K562 (cell line): ENCODE measurements at regions of chr17 and their contacts with region 1.

Region 1: DNA sequence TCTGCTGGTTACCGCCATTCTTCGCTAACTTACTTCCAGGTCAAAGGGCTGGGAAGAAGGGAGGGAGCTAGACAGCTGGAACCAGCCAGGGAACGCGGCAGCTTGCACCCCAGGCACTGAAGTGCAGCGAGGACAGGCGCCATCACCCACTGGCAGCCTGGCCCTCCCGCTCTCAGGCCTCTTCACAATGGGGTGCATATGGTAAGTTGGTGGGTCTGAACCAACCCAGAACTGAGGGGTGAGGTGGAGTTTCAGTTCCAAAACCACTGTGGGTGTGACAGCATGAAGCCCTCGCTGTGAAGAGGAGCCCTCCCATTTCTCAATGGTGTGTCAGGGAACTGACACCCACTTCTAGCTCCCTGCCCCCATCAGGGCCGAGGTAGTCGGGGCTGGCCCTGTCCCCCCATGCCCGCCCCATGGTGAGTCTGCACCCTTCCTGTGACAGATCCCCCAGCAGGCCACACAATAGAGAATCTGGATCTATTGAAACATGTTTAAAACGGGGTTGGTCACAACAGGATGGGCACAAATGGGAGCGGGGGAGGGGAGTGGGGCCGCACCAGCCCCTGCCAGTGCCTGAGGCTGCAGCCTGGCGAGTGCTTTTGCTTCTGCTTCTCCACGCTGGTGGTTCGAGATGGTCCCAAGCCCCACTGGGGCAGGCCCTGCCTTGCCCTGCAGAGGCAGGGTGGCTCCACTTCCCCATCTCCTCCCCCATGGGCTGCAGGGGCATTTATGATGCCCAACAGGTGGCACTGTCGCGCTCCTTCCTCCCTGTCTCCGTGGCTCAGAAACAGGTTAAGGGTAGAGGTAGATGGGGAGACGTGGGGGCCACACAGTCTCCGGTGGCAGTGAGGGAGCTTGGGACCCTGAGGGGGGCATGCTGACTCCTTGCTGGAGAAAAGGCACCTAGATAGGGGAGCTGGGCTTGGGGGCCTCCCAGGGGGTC is 2.3 kb downstream of the LIMD2 start:
- DNase-seq: peak; percentile 40 to 65 (median 56)
- ATAC-seq: peak; percentile 61
- H3K4me3 ChIP-seq: no peak overlapping the region
- H3K27ac ChIP-seq: no peak overlapping the region
- H3K4me1 ChIP-seq: peaks cover 0 to 47% of the 10 kb centered on the region in 2 experiments; a peak in 2 of 5 replicates
- H3K27me3 ChIP-seq: no peaks in the 10 kb centered on the region
- CTCF ChIP-seq: peak; percentile 59 to 84 (median 76); a peak in 5 of 6 replicates
- EP300 ChIP-seq: no peak
- POLR2A ChIP-seq: no peak
- RAD21 ChIP-seq: peak in 1 of 2 experiments; percentile 59; a peak in 2 of 4 replicates

Region 2: GRCh38 chr17:63425482-63425881 is 272.1 kb before region 1 on chr17:
- CTCF ChIA-PET with region 1: interaction called, 5 read pairs
- POLR2A ChIA-PET with region 1: no interaction called
- in situ Hi-C with region 1: no loop called
- intact Hi-C with region 1: loop called (anchors 5 kb)
- DNase-seq: peak; percentile 76 to 88 (median 80)
- ATAC-seq: peak; percentile 89
- H3K4me3 ChIP-seq: no peak overlapping the region
- H3K27ac ChIP-seq: no peak overlapping the region
- H3K4me1 ChIP-seq: peaks cover 9 to 19% of the 10 kb centered on the region in 2 experiments
- H3K27me3 ChIP-seq: no peaks in the 10 kb centered on the region
- CTCF ChIP-seq: peak; percentile 91 to 96 (median 94)
- EP300 ChIP-seq: 0 out of 2 replicates have a peak, but pooled peaks have one; percentile 13
- POLR2A ChIP-seq: no peak
- RAD21 ChIP-seq: peak; percentile 98

Region 3: DNA sequence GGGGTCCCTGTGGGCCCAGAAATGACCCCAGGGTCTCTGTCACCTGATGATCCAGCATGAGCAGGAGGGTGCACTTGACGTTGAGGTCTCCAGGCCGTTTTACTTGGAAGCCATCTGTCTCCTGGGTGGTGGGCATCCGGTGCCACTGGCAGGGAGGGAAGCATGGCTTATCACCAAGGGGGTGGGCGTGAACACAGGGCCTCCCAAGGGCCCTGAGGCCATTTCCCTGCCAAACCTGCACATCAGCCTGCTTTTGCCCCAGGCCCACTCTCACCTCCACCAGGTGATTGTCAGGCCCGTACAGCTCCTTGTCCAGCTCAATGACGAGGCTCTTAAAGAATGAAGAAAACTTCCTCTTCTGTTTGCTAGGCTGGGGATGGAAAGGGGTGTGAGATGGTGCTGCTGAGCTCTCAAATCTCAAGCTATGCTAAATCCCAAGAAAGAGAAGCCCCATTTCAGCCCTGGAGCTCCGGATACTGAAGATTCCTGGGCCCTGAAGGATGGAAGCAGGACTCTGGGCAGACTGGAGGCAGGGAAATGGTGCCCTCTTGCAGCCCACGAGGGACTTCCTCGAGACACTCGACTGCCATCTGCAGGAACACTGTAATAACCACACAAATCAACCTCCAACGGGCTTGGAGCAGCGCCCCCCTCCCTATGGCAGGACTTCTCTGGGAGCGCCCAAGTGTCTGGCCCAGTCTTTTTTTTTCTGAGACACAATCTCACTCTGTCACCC is 137.0 kb after region 1 on chr17:
- CTCF ChIA-PET with region 1: interaction called, 3 read pairs
- POLR2A ChIA-PET with region 1: interaction called, 3 read pairs
- in situ Hi-C with region 1: no loop called
- intact Hi-C with region 1: loop called (anchors 10 kb)
- DNase-seq: peak; percentile 54 to 89 (median 68)
- ATAC-seq: peak; percentile 94
- H3K4me3 ChIP-seq: no peak overlapping the region
- H3K27ac ChIP-seq: 0 out of 3 replicates have a peak overlapping the region, but pooled peaks have one; percentile 27
- H3K4me1 ChIP-seq: peaks cover 0 to 25% of the 10 kb centered on the region in 2 experiments; a peak in 4 of 5 replicates
- H3K27me3 ChIP-seq: no peaks in the 10 kb centered on the region
- CTCF ChIP-seq: peak; percentile 91 to 99 (median 99)
- EP300 ChIP-seq: no peak
- POLR2A ChIP-seq: no peak
- RAD21 ChIP-seq: peak; percentile 44 to 68; a peak in 3 of 4 replicates